Endothelial cell of umbilical vein (primary cell): ENCODE measurements at regions of chr6 and their contacts with region 1.

Region 1: GRCh38 chr6:34834789-34835518 is 43.1 kb downstream of the BLTP3A start:
- DNase-seq: no peak
- H3K4me3 ChIP-seq: no peak overlapping the region
- H3K27ac ChIP-seq: no peak overlapping the region
- H3K4me1 ChIP-seq: no peaks in the 10 kb centered on the region
- H3K27me3 ChIP-seq: no peaks in the 10 kb centered on the region
- CTCF ChIP-seq: no peak
- POLR2A ChIP-seq: no peak

Region 2: GRCh38 chr6:34865107-34865506 is 30.2 kb after region 1 on chr6:
- CTCF ChIA-PET with region 1: no interaction called
- POLR2A ChIA-PET with region 1: no interaction called
- dilution Hi-C with region 1: no loop called
- intact Hi-C with region 1: no loop called
- DNase-seq: peak; percentile 98
- H3K4me3 ChIP-seq: peak overlapping the region in 1 of 3 experiments; percentile 3
- H3K27ac ChIP-seq: peak overlapping the region; percentile 92
- H3K4me1 ChIP-seq: peaks cover 22% of the 10 kb centered on the region
- H3K27me3 ChIP-seq: no peaks in the 10 kb centered on the region
- CTCF ChIP-seq: no peak
- POLR2A ChIP-seq: peak; percentile 29

Region 3: DNA sequence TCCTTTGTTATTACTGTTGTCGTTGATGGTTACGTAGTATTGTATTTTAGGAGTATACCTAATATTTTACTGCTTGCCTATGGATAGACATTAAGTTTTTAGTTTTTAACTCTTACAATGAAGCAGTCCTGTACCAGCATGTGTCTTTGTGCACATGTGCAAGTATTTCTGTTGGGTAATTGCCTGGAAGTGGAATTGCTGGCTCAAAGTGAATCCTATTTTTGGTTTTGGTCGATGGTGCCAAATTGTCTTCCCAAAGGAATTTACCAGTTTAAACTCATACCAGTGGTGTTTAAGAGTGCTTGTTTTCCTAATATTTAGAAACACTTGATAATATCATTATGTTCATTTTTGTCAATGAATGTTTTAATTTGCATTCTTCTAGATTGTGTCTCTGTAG is 129.6 kb after region 1 on chr6:
- CTCF ChIA-PET with region 1: no interaction called
- POLR2A ChIA-PET with region 1: interaction called, 14 read pairs
- dilution Hi-C with region 1: no loop called
- intact Hi-C with region 1: no loop called
- DNase-seq: no peak
- H3K4me3 ChIP-seq: no peak overlapping the region
- H3K27ac ChIP-seq: no peak overlapping the region
- H3K4me1 ChIP-seq: no peaks in the 10 kb centered on the region
- H3K27me3 ChIP-seq: no peaks in the 10 kb centered on the region
- CTCF ChIP-seq: no peak
- POLR2A ChIP-seq: no peak